T-cell (primary cell): ENCODE measurements at regions of chr10 and their contacts with region 1.

Region 1: GRCh38 chr10:35109141-35109540 is 17.5 kb upstream of the CREM start:
- DNase-seq: no peak
- ATAC-seq: no peak
- H3K4me3 ChIP-seq: no peak overlapping the region
- H3K4me3 Mint-ChIP-seq: no peak overlapping the region
- H3K27ac ChIP-seq: no peak overlapping the region
- H3K27ac Mint-ChIP-seq: no peak overlapping the region
- H3K4me1 ChIP-seq: no peaks in the 10 kb centered on the region
- H3K4me1 Mint-ChIP-seq: no peaks in the 10 kb centered on the region
- H3K27me3 ChIP-seq: peaks cover 0 to 11% of the 10 kb centered on the region in 2 experiments
- H3K27me3 Mint-ChIP-seq: peaks cover 2 to 3% of the 10 kb centered on the region in 2 donors

Region 2: GRCh38 chr10:35208536-35208935 is 99.4 kb after region 1 on chr10:
- CTCF ChIA-PET with region 1: no interaction called
- POLR2A ChIA-PET with region 1: interaction called in 1 of 2 experiments, 10 read pairs
- DNase-seq: peak in 1 of 35 experiments; percentile 23
- ATAC-seq: peak in 3 of 4 experiments; percentile 23 to 60 (median 34)
- H3K4me3 ChIP-seq: no peak overlapping the region
- H3K4me3 Mint-ChIP-seq: peak overlapping the region; percentile 11 to 42 (median 17)
- H3K27ac ChIP-seq: peak overlapping the region; percentile 69
- H3K27ac Mint-ChIP-seq: peak overlapping the region; percentile 57 to 84
- H3K4me1 ChIP-seq: peaks cover 0 to 5% of the 10 kb centered on the region in 2 experiments
- H3K4me1 Mint-ChIP-seq: peaks cover 0 to 28% (median 17%) of the 10 kb centered on the region in 3 donors
- H3K27me3 ChIP-seq: no peaks in the 10 kb centered on the region
- H3K27me3 Mint-ChIP-seq: no peaks in the 10 kb centered on the region

Region 3: DNA sequence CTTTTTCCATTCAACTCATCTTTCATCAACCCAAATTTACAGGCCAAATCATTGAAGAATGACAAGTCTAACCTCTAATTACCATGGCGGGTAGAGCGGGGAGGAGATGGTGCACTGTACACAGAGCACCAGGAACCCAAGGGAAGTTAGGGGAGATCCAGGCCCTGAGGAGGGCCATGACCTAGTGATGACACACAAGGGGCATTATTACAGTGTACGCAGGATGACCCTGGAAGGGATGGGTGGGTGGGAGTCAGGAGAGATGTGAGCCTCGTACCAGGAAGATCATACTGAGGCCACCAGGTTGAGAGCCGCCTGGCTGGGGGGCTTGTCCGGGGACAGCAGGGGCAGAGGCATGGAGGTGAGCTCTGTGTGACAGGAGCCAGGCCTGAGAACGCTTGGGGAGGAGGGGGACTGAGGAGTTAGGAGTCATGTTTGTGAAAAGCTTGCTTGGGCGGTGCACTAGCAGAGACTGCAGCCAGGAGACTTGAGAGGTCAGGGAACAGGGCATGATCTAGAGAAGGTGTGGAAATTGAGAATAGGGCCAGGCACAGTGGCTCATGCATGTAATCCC is 137.7 kb after region 1 on chr10:
- CTCF ChIA-PET with region 1: no interaction called
- POLR2A ChIA-PET with region 1: no interaction called
- DNase-seq: no peak
- ATAC-seq: no peak
- H3K4me3 ChIP-seq: no peak overlapping the region
- H3K4me3 Mint-ChIP-seq: no peak overlapping the region
- H3K27ac ChIP-seq: no peak overlapping the region
- H3K27ac Mint-ChIP-seq: no peak overlapping the region
- H3K4me1 ChIP-seq: no peaks in the 10 kb centered on the region
- H3K4me1 Mint-ChIP-seq: no peaks in the 10 kb centered on the region
- H3K27me3 ChIP-seq: peaks cover 0 to 6% of the 10 kb centered on the region in 2 experiments
- H3K27me3 Mint-ChIP-seq: peaks cover 0 to 6% of the 10 kb centered on the region in 2 donors

Region 4: GRCh38 chr10:35379226-35380137 is 270.3 kb after region 1 on chr10:
- CTCF ChIA-PET with region 1: no interaction called
- POLR2A ChIA-PET with region 1: no interaction called
- DNase-seq: peak in 27 of 35 experiments; percentile 10 to 57 (median 27)
- ATAC-seq: peak; percentile 54 to 82 (median 59)
- H3K4me3 ChIP-seq: peak overlapping the region in 1 of 2 donors; percentile 10
- H3K4me3 Mint-ChIP-seq: peak overlapping the region; percentile 21 to 54 (median 46)
- H3K27ac ChIP-seq: no peak overlapping the region
- H3K27ac Mint-ChIP-seq: peak overlapping the region; percentile 10 to 88
- H3K4me1 ChIP-seq: peaks cover 15 to 17% of the 10 kb centered on the region in 2 experiments
- H3K4me1 Mint-ChIP-seq: peaks cover 82 to 87% (median 82%) of the 10 kb centered on the region in 3 donors
- H3K27me3 ChIP-seq: no peaks in the 10 kb centered on the region
- H3K27me3 Mint-ChIP-seq: no peaks in the 10 kb centered on the region

Region 5: DNA sequence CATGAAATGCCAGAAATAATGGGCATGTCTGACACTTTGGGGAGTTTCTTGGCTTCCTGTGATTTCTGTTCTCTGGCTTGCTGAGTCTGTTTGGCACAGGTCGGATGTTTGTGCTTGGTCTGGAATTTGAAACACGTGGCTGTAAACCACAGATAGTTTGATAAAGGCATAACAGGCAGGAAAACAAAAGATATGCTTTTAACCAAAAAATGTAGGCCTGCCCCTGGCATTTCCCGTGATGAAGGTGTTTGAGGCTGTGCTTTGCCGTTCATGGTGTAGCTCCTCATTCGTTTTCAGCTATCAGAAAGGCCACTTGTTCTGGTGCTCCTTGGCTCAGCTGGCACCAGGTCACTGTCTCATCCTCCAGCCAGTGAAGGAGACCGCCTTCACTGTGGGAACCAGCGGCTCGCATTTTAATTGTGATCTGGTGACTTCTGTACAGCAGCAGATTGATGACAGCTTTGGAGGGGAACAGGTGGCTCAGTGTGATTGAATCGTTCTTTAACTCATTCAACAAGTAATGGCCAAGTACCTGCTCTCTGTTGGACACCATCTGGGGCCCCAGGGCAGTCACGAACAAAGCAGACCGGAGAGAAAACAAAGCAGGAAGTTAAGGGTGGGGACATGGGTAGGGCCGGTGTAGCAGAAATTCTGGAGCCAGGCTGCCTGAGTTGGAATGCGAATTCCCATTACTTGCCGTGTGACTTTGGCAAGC is 338.7 kb after region 1 on chr10:
- CTCF ChIA-PET with region 1: no interaction called
- POLR2A ChIA-PET with region 1: no interaction called
- DNase-seq: peak in 34 of 35 experiments; percentile 10 to 68 (median 34)
- ATAC-seq: peak; percentile 78 to 89 (median 84)
- H3K4me3 ChIP-seq: peak overlapping the region in 1 of 2 donors; percentile 36
- H3K4me3 Mint-ChIP-seq: peak overlapping the region; percentile 64 to 83 (median 78)
- H3K27ac ChIP-seq: peak overlapping the region; percentile 69
- H3K27ac Mint-ChIP-seq: peak overlapping the region; percentile 97 to 100
- H3K4me1 ChIP-seq: peaks cover 50 to 51% of the 10 kb centered on the region in 2 experiments
- H3K4me1 Mint-ChIP-seq: peaks cover 77 to 79% (median 79%) of the 10 kb centered on the region in 3 donors
- H3K27me3 ChIP-seq: no peaks in the 10 kb centered on the region
- H3K27me3 Mint-ChIP-seq: no peaks in the 10 kb centered on the region